ENCODE measurements at regions of chr6 and their contacts with region 1.

Region 1: DNA sequence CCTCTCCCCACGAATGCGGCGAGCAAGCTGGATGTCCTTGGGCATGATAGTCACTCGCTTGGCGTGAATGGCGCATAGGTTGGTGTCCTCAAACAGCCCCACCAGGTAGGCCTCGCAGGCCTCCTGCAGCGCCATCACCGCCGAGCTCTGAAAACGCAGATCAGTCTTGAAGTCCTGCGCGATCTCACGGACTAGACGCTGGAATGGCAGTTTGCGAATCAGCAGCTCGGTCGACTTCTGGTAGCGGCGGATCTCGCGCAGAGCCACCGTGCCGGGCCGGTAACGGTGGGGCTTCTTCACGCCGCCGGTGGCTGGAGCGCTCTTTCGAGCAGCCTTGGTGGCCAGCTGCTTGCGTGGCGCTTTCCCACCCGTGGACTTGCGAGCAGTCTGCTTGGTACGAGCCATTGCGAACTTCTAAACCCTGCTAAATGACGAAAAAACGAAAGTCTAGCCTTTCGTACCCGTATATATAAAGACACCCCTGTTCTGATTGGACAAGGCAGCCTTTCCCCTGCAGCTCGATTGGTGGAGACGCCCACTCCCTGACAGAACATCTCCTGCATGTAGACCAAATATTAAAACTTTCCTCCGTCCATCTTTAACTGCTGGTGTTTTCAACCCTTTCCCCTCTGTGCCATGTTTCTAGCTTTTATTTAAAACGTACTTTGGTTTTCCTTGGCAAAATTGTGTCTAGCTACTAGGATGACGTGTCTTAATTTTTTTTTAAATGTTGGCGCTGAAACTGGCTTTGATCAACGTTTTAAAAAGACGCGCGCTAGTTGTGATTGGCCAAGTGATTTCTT is 109.8 kb downstream of the HFE start:
- DNase-seq: peak; percentile 85
- H3K4me3 Mint-ChIP-seq: peak overlapping the region; percentile 93
- H3K27ac Mint-ChIP-seq: peak overlapping the region; percentile 96
- H3K4me1 Mint-ChIP-seq: peaks cover 49% of the 10 kb centered on the region
- H3K27me3 Mint-ChIP-seq: no peaks in the 10 kb centered on the region

Region 2: DNA sequence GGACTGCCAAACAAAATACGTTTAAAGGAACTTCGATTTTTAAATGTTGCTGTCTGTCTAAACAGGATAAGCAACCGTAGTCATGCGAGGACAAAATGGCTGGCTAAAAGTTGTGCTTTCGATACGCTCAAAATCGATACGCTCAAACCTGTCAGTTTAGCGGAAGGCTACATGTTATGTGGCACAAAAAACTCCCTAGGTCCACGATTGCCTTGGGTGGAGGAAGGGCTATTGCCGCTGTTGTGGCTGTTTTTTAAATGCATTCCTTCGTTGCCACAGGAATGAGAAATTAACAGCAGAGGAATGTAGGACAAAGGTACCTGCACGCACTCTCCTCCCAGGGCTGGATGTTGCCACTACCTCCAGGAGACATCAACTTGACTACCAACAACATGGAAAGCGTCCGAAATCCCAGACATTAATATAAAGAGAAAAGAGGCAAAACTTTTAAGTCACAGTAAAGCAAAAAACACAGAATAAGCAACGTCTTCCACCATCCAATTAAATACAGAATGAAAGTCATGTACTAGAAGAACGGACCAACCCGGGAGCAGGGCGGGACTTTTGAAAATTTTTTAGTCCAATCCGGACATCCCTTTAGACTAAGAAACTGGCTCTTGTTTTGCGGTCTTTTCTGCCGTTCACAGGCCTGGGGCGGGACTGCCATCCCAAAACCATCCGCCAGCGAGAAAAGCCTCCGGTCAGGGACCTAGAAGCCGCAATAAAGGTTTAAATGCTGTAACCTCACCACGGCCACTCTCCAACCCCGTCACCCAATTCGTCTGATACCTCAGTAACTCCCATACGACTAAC is 142.0 kb before region 1 on chr6:
- CTCF ChIA-PET with region 1: no interaction called
- POLR2A ChIA-PET with region 1: interaction called, 161 read pairs
- DNase-seq: peak; percentile 92
- H3K4me3 Mint-ChIP-seq: peak overlapping the region; percentile 83
- H3K27ac Mint-ChIP-seq: peak overlapping the region; percentile 99
- H3K4me1 Mint-ChIP-seq: peaks cover 37% of the 10 kb centered on the region
- H3K27me3 Mint-ChIP-seq: no peaks in the 10 kb centered on the region

Region 3: DNA sequence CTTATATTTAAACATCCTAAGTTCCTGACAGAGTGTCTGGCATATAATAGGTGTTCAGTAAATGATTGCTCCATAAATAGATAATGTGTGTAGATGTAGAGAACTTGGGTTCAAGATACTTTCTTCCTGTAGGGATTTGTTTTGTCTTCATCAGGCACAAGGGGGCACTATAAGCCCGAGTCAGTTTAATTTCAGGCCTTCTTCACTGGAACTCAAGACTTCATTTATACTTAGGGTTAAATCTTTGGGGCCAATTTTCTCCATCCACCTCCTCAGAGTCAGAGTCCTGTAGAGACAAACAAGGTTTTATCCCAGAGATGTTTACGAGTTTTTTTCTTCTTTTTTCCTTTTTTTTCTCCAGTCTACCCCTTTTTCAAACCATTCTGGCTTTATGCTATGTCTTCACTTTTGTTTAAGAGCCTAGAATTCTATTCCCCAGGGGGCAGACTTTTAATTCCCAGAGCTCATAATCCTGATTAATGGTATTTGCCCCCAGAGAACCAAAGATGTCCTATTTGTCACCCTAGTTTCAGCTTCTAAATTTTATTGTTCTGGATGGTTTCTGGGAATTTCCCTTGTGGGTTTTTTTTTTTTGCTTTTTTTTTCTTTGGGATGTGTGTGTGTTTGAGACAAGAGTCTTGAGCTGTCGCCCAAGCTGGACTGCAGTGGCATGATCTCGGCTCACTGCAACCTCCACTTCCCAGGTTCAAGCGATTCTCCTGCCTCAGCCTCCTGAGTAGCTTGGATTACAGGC is 21.4 kb before region 1 on chr6:
- CTCF ChIA-PET with region 1: interaction called, 28 read pairs
- POLR2A ChIA-PET with region 1: interaction called, 330 read pairs
- DNase-seq: peak; percentile 68
- H3K4me3 Mint-ChIP-seq: peak overlapping the region; percentile 5
- H3K27ac Mint-ChIP-seq: peak overlapping the region; percentile 50
- H3K4me1 Mint-ChIP-seq: peaks cover 44% of the 10 kb centered on the region
- H3K27me3 Mint-ChIP-seq: no peaks in the 10 kb centered on the region

Region 4: GRCh38 chr6:26223650-26224546 is 26.9 kb after region 1 on chr6:
- CTCF ChIA-PET with region 1: no interaction called
- POLR2A ChIA-PET with region 1: interaction called, 141 read pairs
- DNase-seq: peak; percentile 72
- H3K4me3 Mint-ChIP-seq: no peak overlapping the region
- H3K27ac Mint-ChIP-seq: no peak overlapping the region
- H3K4me1 Mint-ChIP-seq: peaks cover 31% of the 10 kb centered on the region
- H3K27me3 Mint-ChIP-seq: no peaks in the 10 kb centered on the region

Region 5: GRCh38 chr6:26312501-26313390 is 115.7 kb after region 1 on chr6:
- CTCF ChIA-PET with region 1: no interaction called
- POLR2A ChIA-PET with region 1: interaction called, 17 read pairs
- DNase-seq: peak; percentile 81
- H3K4me3 Mint-ChIP-seq: peak overlapping the region; percentile 83
- H3K27ac Mint-ChIP-seq: peak overlapping the region; percentile 82
- H3K4me1 Mint-ChIP-seq: peaks cover 53% of the 10 kb centered on the region
- H3K27me3 Mint-ChIP-seq: no peaks in the 10 kb centered on the region

Region 6: GRCh38 chr6:27825025-27825793 is 1628.2 kb after region 1 on chr6:
- CTCF ChIA-PET with region 1: no interaction called
- POLR2A ChIA-PET with region 1: interaction called, 25 read pairs
- DNase-seq: no peak
- H3K4me3 Mint-ChIP-seq: peak overlapping the region; percentile 82
- H3K27ac Mint-ChIP-seq: peak overlapping the region; percentile 99
- H3K4me1 Mint-ChIP-seq: peaks cover 51% of the 10 kb centered on the region
- H3K27me3 Mint-ChIP-seq: no peaks in the 10 kb centered on the region

Region 7: GRCh38 chr6:27871924-27872638 is 1675.0 kb after region 1 on chr6:
- CTCF ChIA-PET with region 1: no interaction called
- POLR2A ChIA-PET with region 1: interaction called, 59 read pairs
- DNase-seq: peak; percentile 87
- H3K4me3 Mint-ChIP-seq: peak overlapping the region; percentile 81
- H3K27ac Mint-ChIP-seq: peak overlapping the region; percentile 99
- H3K4me1 Mint-ChIP-seq: peaks cover 60% of the 10 kb centered on the region
- H3K27me3 Mint-ChIP-seq: no peaks in the 10 kb centered on the region